PC-9 (cell line): ENCODE measurements at regions of chr14 and their contacts with region 1.

Region 1: GRCh38 chr14:31456841-31457664 is at the start of gene DTD2:
- DNase-seq: peak; percentile 81 to 86
- H3K4me3 ChIP-seq: peak within 1 kb of the TSS; percentile 62
- H3K27ac ChIP-seq: peak within 1 kb of the TSS; percentile 68
- H3K4me1 ChIP-seq: peaks cover 13% of the 10 kb centered on the region; the same call in 1 of the 2 replicates
- H3K27me3 ChIP-seq: no peaks in the 10 kb centered on the region
- CTCF ChIP-seq: no peak
- total RNA-seq, gene DTD2: 9.5 and 10.1 TPM in 2 replicates

Region 2: DNA sequence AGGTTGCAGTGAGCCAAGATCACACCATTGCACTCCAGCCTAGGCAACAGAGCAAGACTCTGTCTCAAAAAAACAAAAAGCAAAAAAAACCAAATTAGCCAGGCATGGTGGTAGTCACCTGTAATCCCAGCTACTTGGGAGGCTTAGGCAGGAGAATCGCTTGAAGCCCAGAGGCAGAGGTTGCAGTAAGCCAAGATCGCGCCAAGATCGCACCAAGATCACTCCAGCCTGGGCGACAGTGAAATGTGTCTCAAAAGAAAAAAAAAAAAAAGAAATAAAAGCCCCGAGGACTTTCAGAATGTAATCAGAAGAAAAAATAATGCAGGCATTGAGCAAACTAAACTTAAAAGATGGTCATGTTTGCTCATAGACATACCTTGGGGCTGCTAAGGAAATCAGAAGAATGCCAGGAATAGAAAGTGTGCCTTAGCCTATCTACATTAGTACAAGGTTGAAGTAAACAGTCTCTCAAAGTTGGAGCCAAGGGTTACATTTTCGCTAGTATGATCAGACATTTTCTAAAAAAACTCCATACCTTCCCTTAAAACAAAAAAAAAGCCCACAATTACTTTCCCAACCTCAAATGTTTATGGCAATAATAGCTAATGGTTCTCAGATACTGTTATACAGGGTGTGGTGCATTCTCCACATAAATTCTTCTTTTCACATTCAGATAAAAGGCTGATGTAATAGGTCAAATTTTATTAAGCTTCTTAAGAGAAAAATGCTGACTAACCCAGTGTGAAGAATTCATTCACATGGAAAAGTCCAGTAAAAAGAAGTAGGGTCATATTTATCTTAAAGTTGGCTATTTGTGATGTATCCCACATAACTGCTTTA is 15.6 kb before region 1 on chr14:
- CTCF ChIA-PET with region 1: interaction called, 5 read pairs
- POLR2A ChIA-PET with region 1: no interaction called
- intact Hi-C with region 1: loop called (anchors 1 kb)
- DNase-seq: peak in 1 of 2 experiments; percentile 51
- H3K4me3 ChIP-seq: no peak overlapping the region
- H3K27ac ChIP-seq: peak overlapping the region; percentile 58
- H3K4me1 ChIP-seq: peaks cover 18% of the 10 kb centered on the region
- H3K27me3 ChIP-seq: no peaks in the 10 kb centered on the region
- CTCF ChIP-seq: no peak